GM12878 (cell line): ENCODE measurements at regions of chr4 and their contacts with region 1.

Region 1: GRCh38 chr4:168710353-168710946 is 213.6 kb downstream of the PALLD start:
- DNase-seq: no peak
- ATAC-seq: peak; percentile 54
- H3K4me3 ChIP-seq: no peak overlapping the region
- H3K27ac ChIP-seq: no peak overlapping the region
- H3K4me1 ChIP-seq: no peaks in the 10 kb centered on the region
- H3K27me3 ChIP-seq: no peaks in the 10 kb centered on the region; a peak in 1 of 4 replicates
- CTCF ChIP-seq: peak; percentile 9 to 57 (median 26); a peak in 4 of 6 replicates
- EP300 ChIP-seq: no peak
- POLR2A ChIP-seq: no peak
- RAD21 ChIP-seq: peak; percentile 34

Region 2: DNA sequence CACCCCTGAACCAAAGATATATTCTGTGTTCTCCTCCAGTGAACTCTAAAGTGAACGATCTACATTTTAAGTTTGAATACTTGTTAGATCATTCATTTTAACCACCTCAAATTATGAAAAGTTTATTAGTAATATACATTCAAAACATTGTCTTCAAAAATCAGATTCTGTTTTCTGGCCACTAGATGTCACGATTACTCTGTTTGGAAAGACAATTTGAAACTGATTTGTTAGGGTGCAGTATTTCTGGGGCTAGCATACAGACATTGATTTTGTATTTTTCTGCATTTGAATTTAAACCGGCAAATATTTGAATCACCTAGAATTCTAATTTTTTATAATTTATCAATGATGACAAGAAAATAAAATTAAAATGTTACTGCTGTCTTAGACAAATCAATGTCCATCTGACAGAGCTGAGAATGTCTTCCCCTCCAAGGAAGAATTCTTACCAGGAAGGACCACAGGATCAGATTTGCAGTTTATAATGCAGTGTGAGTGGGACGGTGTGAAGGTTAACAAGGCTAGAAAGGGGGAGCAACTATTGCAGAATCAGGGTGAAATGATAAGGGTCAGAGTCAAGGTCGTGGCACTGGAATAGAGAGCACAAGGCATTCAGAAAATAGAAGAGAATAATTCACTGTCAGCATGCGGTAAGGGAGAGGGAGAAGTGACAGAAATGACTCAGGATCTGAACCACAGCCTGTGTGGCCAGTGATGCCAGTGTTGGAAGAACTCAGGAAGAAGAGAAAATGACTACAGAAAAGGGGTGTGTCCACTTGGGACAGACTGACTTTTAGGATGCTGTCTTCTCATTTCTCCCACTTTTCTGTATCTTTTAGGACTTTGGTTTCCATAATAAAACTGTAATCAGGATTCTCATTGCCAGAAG is 526.5 kb before region 1 on chr4:
- CTCF ChIA-PET with region 1: interaction called, 7 read pairs
- POLR2A ChIA-PET with region 1: no interaction called
- RAD21 ChIA-PET with region 1: interaction called, 3 read pairs
- SMC1A ChIA-PET with region 1: interaction called, 3 read pairs
- in situ Hi-C with region 1: no loop called
- intact Hi-C with region 1: loop called (anchors 10 kb)
- DNase-seq: peak; percentile 12
- ATAC-seq: peak; percentile 63
- H3K4me3 ChIP-seq: no peak overlapping the region
- H3K27ac ChIP-seq: no peak overlapping the region
- H3K4me1 ChIP-seq: 0 out of 2 replicates have a peak, but pooled peaks cover 3% of the 10 kb centered on the region
- H3K27me3 ChIP-seq: no peaks in the 10 kb centered on the region
- CTCF ChIP-seq: peak; percentile 33 to 61 (median 47); a peak in 5 of 6 replicates
- EP300 ChIP-seq: no peak
- POLR2A ChIP-seq: no peak
- RAD21 ChIP-seq: peak; percentile 80

Region 3: DNA sequence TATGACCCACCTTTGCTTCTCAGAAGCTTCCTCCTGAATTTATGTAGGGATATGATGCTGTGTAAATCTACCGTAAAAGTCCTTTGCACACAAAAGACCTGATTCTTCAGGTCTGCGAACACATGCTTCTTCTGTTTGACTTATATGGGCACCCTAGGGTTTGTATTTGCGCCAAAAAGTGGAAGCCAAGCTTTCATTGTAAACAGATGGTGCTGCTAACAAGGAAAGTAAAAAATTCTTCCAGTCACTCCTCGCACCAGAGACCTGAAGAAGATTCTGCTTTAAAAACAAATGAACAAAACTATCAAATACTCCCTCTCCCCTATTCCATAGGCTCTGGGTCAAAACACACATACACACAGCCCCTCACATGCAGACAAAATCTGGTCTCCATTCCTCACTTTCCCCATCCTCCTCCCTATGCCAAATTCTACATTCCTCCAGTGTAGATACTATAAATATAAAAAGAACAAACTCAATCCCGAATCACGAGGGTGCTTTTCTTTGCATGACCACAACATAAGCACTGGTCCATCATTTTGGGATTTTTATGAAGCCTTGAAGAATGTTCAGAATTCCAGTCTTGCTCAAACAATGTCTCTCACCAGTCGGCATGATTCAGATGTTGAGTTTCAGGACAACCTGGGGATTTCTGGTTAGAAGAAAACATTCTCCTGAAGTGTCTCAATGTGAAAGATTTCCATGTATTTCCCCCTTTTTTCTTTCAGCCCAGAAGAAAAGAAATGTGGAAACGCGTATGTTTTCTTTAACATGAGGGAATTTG is 88.5 kb before region 1 on chr4:
- CTCF ChIA-PET with region 1: no interaction called
- POLR2A ChIA-PET with region 1: no interaction called
- RAD21 ChIA-PET with region 1: no interaction called
- SMC1A ChIA-PET with region 1: no interaction called
- in situ Hi-C with region 1: no loop called
- intact Hi-C with region 1: no loop called
- DNase-seq: no peak
- ATAC-seq: no peak
- H3K4me3 ChIP-seq: no peak overlapping the region
- H3K27ac ChIP-seq: no peak overlapping the region
- H3K4me1 ChIP-seq: no peaks in the 10 kb centered on the region
- H3K27me3 ChIP-seq: peaks cover 0 to 2% of the 10 kb centered on the region in 2 experiments; a peak in 2 of 4 replicates
- CTCF ChIP-seq: no peak
- EP300 ChIP-seq: no peak
- POLR2A ChIP-seq: no peak
- RAD21 ChIP-seq: no peak

Region 4: GRCh38 chr4:168731006-168731636 is 20.7 kb after region 1 on chr4:
- CTCF ChIA-PET with region 1: interaction called, 32 read pairs
- POLR2A ChIA-PET with region 1: no interaction called
- RAD21 ChIA-PET with region 1: interaction called, 23 read pairs
- SMC1A ChIA-PET with region 1: interaction called, 42 read pairs
- in situ Hi-C with region 1: no loop called
- intact Hi-C with region 1: no loop called
- DNase-seq: no peak
- ATAC-seq: peak; percentile 28
- H3K4me3 ChIP-seq: no peak overlapping the region
- H3K27ac ChIP-seq: no peak overlapping the region
- H3K4me1 ChIP-seq: no peaks in the 10 kb centered on the region
- H3K27me3 ChIP-seq: no peaks in the 10 kb centered on the region
- CTCF ChIP-seq: no peak
- EP300 ChIP-seq: peak in 1 of 2 experiments; percentile 7; a peak in 1 of 4 replicates
- POLR2A ChIP-seq: no peak
- RAD21 ChIP-seq: no peak

Region 5: GRCh38 chr4:168797176-168797575 is 86.7 kb after region 1 on chr4:
- CTCF ChIA-PET with region 1: no interaction called
- POLR2A ChIA-PET with region 1: no interaction called
- RAD21 ChIA-PET with region 1: no interaction called
- SMC1A ChIA-PET with region 1: interaction called, 6 read pairs
- in situ Hi-C with region 1: no loop called
- intact Hi-C with region 1: loop called (anchors 5 kb)
- DNase-seq: no peak
- ATAC-seq: peak; percentile 20; the same call in 2 of the 3 replicates
- H3K4me3 ChIP-seq: no peak overlapping the region
- H3K27ac ChIP-seq: no peak overlapping the region
- H3K4me1 ChIP-seq: no peaks in the 10 kb centered on the region
- H3K27me3 ChIP-seq: no peaks in the 10 kb centered on the region; a peak in 1 of 4 replicates
- CTCF ChIP-seq: no peak
- EP300 ChIP-seq: no peak
- POLR2A ChIP-seq: no peak
- RAD21 ChIP-seq: no peak

Region 6: DNA sequence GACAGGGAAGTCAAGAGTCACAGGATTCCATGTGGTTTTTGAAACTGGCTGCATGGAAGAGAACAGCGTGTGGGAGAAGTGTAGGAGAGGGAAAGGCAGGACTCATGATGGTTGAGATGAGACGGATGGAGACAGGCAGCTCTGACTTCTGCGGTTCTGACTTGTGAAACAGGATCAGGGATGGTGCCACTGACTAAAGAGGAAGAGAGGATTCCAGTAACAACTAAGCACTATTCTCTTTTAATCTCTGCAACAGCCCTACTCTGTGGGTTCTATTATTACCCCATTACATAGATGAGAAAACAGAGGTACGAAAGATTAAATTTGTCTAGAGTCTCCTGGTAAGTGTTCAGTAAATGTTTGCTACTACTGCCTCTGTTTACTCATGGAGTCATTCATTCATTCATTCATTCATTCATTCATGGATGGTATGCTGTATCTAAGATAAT is 143.3 kb after region 1 on chr4:
- CTCF ChIA-PET with region 1: interaction called, 6 read pairs
- POLR2A ChIA-PET with region 1: no interaction called
- RAD21 ChIA-PET with region 1: interaction called, 11 read pairs
- SMC1A ChIA-PET with region 1: interaction called, 28 read pairs
- in situ Hi-C with region 1: no loop called
- intact Hi-C with region 1: no loop called
- DNase-seq: peak; percentile 15
- ATAC-seq: peak; percentile 80
- H3K4me3 ChIP-seq: no peak overlapping the region
- H3K27ac ChIP-seq: no peak overlapping the region
- H3K4me1 ChIP-seq: peaks cover 8% of the 10 kb centered on the region
- H3K27me3 ChIP-seq: no peaks in the 10 kb centered on the region
- CTCF ChIP-seq: no peak
- EP300 ChIP-seq: no peak
- POLR2A ChIP-seq: no peak
- RAD21 ChIP-seq: no peak

Region 7: GRCh38 chr4:168907119-168907698 is 196.8 kb after region 1 on chr4:
- CTCF ChIA-PET with region 1: interaction called, 362 read pairs
- POLR2A ChIA-PET with region 1: interaction called, 6 read pairs
- RAD21 ChIA-PET with region 1: interaction called, 8 read pairs
- SMC1A ChIA-PET with region 1: interaction called, 292 read pairs
- in situ Hi-C with region 1: no loop called
- intact Hi-C with region 1: no loop called
- DNase-seq: no peak
- ATAC-seq: no peak
- H3K4me3 ChIP-seq: no peak overlapping the region
- H3K27ac ChIP-seq: no peak overlapping the region
- H3K4me1 ChIP-seq: no peaks in the 10 kb centered on the region
- H3K27me3 ChIP-seq: no peaks in the 10 kb centered on the region
- CTCF ChIP-seq: no peak
- EP300 ChIP-seq: no peak
- POLR2A ChIP-seq: no peak
- RAD21 ChIP-seq: no peak

Region 8: GRCh38 chr4:169010125-169011023 is 299.9 kb after region 1 on chr4 and contains the start of gene CBR4:
- CTCF ChIA-PET with region 1: interaction called, 24 read pairs
- POLR2A ChIA-PET with region 1: no interaction called
- RAD21 ChIA-PET with region 1: interaction called, 11 read pairs
- SMC1A ChIA-PET with region 1: interaction called, 6 read pairs
- in situ Hi-C with region 1: no loop called
- intact Hi-C with region 1: loop called (anchors 2 kb)
- DNase-seq: peak; percentile 94
- ATAC-seq: peak; percentile 96
- H3K4me3 ChIP-seq: peak within 1 kb of the TSS; percentile 86
- H3K27ac ChIP-seq: peak within 1 kb of the TSS; percentile 91
- H3K4me1 ChIP-seq: no peaks in the 10 kb centered on the region
- H3K27me3 ChIP-seq: no peaks in the 10 kb centered on the region
- CTCF ChIP-seq: peak; percentile 6 to 36 (median 35); a peak in 2 of 6 replicates
- EP300 ChIP-seq: no peak; a peak in 1 of 4 replicates
- POLR2A ChIP-seq: peak; percentile 86
- RAD21 ChIP-seq: 0 out of 2 replicates have a peak, but pooled peaks have one; percentile 11
- polyA plus RNA-seq, gene CBR4: 21.4 to 36.2 TPM